ENCODE measurements at regions of chr10 and their contacts with region 1.

Region 1: DNA sequence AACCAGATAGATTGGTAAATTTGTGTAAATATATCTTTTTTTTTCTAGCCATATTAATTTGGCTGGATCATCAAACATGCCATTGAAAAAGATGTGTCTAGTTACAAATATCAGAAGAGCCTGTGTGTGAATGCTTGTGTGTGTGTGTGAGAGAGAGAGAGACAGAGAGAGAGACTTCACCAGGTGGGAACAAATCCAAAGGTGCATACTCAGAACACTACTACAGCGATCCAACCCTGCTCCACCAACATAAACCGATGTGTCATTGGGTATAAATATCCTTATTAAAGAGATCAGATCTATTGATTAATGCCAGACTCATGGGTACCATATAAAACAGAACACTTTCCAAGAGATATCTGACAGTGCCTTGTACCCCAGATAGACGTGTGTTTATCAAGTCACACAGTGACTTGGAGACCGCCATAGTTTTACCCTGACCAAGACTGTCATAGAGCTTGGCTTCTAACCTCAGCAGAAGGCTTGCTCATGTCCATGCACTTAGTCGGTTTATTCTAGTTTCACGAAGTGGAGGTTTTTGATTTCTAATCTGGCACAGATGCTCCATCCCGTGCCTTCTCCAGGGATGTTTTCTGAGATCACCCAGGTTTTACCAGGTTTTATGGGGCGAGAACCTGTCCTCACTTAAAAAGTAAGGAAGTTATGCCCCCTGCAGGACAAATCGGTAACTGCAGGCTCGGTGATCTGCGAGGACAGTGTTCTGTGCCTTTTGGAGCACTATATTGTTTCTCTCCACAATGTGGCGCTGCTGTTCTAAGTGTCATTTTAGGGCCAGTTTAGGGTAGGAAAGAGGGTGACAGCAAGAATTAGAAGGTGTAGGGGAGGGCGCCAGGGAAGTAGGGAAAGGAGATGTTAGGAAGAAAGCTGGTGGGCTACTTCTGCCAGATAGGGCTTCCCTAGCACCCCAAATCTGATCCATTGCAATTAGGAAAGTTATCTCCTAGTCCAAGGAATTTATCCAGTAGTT is 29.3 kb upstream of the WNT8B start:
- DNase-seq: peak; percentile 97
- H3K4me3 ChIP-seq: no peak overlapping the region
- H3K27ac ChIP-seq: no peak overlapping the region
- H3K4me1 ChIP-seq: no peaks in the 10 kb centered on the region
- H3K27me3 ChIP-seq: peaks cover 7% of the 10 kb centered on the region
- CTCF ChIP-seq: peak; percentile 98 to 100 (median 99)
- EP300 ChIP-seq: no peak
- POLR2A ChIP-seq: no peak

Region 2: GRCh38 chr10:99926925-99927720 is 506.4 kb before region 1 on chr10:
- in situ Hi-C with region 1: no loop called
- intact Hi-C with region 1: no loop called
- DNase-seq: peak; percentile 76
- H3K4me3 ChIP-seq: peak overlapping the region in 3 of 4 donors; percentile 37 to 56 (median 52)
- H3K27ac ChIP-seq: peak overlapping the region; percentile 84 to 88 (median 87)
- H3K4me1 ChIP-seq: peaks cover 4 to 77% (median 35%) of the 10 kb centered on the region in 4 donors
- H3K27me3 ChIP-seq: no peaks in the 10 kb centered on the region
- CTCF ChIP-seq: peak in 1 of 5 experiments; percentile 30
- EP300 ChIP-seq: no peak
- POLR2A ChIP-seq: peak; percentile 45

Region 3: GRCh38 chr10:100338434-100339036 is 95.0 kb before region 1 on chr10:
- in situ Hi-C with region 1: loop called (anchors 5 kb)
- intact Hi-C with region 1: loop called (anchors 2 kb)
- DNase-seq: peak; percentile 83
- H3K4me3 ChIP-seq: no peak overlapping the region
- H3K27ac ChIP-seq: no peak overlapping the region
- H3K4me1 ChIP-seq: peaks cover 0 to 12% (median 0%) of the 10 kb centered on the region in 4 donors
- H3K27me3 ChIP-seq: peaks cover 16% of the 10 kb centered on the region
- CTCF ChIP-seq: peak; percentile 89 to 94 (median 94)
- EP300 ChIP-seq: no peak
- POLR2A ChIP-seq: no peak

Region 4: DNA sequence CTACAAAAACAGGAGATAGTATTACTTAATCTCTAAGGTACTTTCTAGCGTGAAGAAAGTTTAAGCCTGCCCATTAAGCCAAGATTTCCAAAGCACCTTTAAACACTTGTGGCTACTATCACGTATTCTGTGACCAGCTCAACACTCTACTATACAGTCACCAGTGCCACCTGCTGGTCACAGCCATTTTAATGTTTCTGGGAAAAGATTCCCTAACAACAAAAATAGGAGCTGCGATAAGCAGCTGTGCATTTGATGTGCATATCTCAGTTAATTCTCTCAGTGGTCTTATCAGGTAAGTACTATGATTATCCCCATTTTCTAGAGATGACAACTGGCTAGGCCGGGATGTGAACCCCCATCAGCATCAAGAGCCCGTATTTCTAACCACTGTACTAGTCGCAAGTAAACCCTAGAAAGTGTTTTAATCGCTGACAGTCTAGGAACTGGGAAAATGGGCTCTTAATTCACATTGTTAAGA is 85.3 kb after region 1 on chr10:
- in situ Hi-C with region 1: loop called in 2 of 4 experiments (anchors 5 to 10 kb)
- intact Hi-C with region 1: no loop called
- DNase-seq: peak; percentile 70
- H3K4me3 ChIP-seq: peak overlapping the region in 3 of 4 donors; percentile 20 to 47 (median 36)
- H3K27ac ChIP-seq: no peak overlapping the region
- H3K4me1 ChIP-seq: peaks cover 0 to 12% (median 6%) of the 10 kb centered on the region in 4 donors
- H3K27me3 ChIP-seq: peaks cover 8% of the 10 kb centered on the region
- CTCF ChIP-seq: peak; percentile 65 to 71 (median 68)
- EP300 ChIP-seq: no peak
- POLR2A ChIP-seq: no peak